BJ (cell line): ENCODE measurements at regions of chr17 and their contacts with region 1.

Region 1: GRCh38 chr17:49952209-49952911 is 16.6 kb upstream of the DLX4 start:
- DNase-seq: no peak
- H3K4me3 ChIP-seq: no peak overlapping the region
- H3K27me3 ChIP-seq: peaks cover 15% of the 10 kb centered on the region
- CTCF ChIP-seq: peak; percentile 95

Region 2: GRCh38 chr17:49926886-49927285 is 25.5 kb before region 1 on chr17:
- CTCF ChIA-PET with region 1: interaction called, 22 read pairs
- POLR2A ChIA-PET with region 1: no interaction called
- DNase-seq: no peak
- H3K4me3 ChIP-seq: no peak overlapping the region
- H3K27me3 ChIP-seq: peaks cover 15% of the 10 kb centered on the region
- CTCF ChIP-seq: no peak

Region 3: GRCh38 chr17:49935526-49936210 is 16.7 kb before region 1 on chr17:
- CTCF ChIA-PET with region 1: interaction called, 75 read pairs
- POLR2A ChIA-PET with region 1: no interaction called
- DNase-seq: no peak
- H3K4me3 ChIP-seq: no peak overlapping the region
- H3K27me3 ChIP-seq: peaks cover 22% of the 10 kb centered on the region
- CTCF ChIP-seq: no peak

Region 4: GRCh38 chr17:49963626-49964302 is 11.4 kb after region 1 on chr17:
- CTCF ChIA-PET with region 1: interaction called, 19 read pairs
- POLR2A ChIA-PET with region 1: no interaction called
- DNase-seq: no peak
- H3K4me3 ChIP-seq: no peak overlapping the region
- H3K27me3 ChIP-seq: peaks cover 55% of the 10 kb centered on the region
- CTCF ChIP-seq: no peak

Region 5: DNA sequence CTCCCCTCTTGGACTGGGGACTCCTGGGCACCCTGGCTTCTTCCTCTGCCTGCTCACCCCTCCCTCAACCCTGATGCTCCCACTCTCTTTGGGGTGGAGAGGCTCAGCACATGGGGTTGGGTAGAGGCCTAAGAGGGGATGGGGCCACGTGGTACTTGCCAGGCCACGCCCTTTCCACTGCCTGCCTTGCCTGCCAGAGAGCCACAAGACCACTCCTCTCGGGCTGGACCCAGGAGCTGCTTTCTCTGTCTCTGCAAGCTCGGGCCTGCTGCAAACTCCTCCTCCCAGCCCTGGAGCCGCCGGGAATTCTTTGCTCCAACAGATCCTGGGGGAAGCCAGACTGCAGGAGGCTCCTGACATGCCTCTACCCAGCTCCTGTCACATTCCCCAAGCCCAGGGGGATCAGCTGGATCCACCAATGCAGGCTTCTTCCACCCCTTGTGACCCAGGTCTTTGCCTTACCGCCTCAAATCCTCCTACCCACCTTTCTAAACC is 28.4 kb after region 1 on chr17:
- CTCF ChIA-PET with region 1: interaction called, 27 read pairs
- POLR2A ChIA-PET with region 1: no interaction called
- DNase-seq: no peak
- H3K4me3 ChIP-seq: no peak overlapping the region
- H3K27me3 ChIP-seq: peaks cover 29% of the 10 kb centered on the region
- CTCF ChIP-seq: no peak

Region 6: GRCh38 chr17:49987681-49988441 is 35.5 kb after region 1 on chr17:
- CTCF ChIA-PET with region 1: interaction called, 110 read pairs
- POLR2A ChIA-PET with region 1: no interaction called
- DNase-seq: no peak
- H3K4me3 ChIP-seq: no peak overlapping the region
- H3K27me3 ChIP-seq: peaks cover 18% of the 10 kb centered on the region
- CTCF ChIP-seq: no peak